Activated naive CD4-positive, alpha-beta T cell treated with anti-CD3 and anti-CD28 coated beads, Interleukin-2, amount 10 ng/mL, durations not matched to agents 7 days and 5 days (primary cell): ENCODE measurements at regions of chr16 and their contacts with region 1.

Region 1: DNA sequence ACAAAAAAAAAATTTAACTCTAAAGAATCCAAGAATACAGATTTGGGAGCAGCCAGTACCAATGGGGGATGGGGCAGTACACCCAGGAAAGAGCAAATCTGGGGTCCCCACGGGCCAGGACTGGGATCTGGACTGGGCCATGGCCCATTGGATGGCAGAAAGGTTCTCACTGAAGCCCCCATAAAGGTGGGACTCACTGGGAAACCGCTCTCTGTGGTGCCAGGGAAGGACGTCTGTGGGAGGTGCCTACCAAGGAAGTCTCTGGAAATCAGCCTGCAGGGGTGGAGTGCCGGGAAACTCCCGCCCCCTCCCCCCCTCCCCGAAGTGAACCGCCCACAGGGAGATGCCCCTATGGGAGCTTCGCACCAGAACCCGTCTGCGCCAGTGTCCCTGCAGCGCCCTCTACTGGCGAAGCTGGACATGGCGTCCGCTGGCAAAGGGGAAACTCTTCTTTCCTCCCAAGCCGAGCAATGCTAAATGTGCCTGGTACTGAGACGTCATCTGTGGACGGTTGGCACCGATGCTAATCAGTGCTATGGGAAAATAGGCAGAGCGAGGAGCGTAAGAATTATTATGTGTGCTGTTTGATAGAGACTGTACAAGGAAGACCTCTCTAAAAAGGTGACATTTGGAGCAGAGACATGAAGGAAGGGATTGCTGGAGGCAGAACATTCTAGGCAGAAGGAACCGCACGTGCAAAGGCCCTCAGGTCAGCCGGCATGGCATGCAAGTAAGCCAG is 671.1 kb downstream of the WWOX start:
- DNase-seq: peak; percentile 79
- H3K4me3 Mint-ChIP-seq: no peak overlapping the region
- H3K27ac Mint-ChIP-seq: peak overlapping the region; percentile 22
- H3K4me1 Mint-ChIP-seq: peaks cover 13% of the 10 kb centered on the region
- H3K27me3 Mint-ChIP-seq: peaks cover 3% of the 10 kb centered on the region

Region 2: GRCh38 chr16:78624366-78624765 is 146.2 kb before region 1 on chr16:
- CTCF ChIA-PET with region 1: no interaction called
- DNase-seq: no peak
- H3K4me3 Mint-ChIP-seq: no peak overlapping the region
- H3K27ac Mint-ChIP-seq: no peak overlapping the region
- H3K4me1 Mint-ChIP-seq: no peaks in the 10 kb centered on the region
- H3K27me3 Mint-ChIP-seq: no peaks in the 10 kb centered on the region

Region 3: DNA sequence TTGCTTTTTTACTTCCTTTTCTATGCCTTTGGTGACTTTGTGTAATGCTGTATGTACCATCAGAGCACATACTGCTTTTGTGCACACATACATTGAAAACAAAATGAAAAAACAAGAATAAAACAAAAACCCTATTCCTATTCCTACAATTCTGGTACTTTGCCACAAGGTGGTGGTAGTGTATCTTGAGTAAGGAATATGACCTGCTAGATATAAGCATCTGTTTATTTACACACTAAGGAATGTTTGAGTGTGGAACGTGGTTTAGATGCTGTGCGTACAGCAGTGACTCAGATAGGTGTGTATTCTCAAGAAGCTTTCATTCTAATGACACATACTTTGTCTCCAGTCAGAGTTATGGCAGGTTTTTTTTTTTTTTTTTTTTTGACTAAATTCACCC is 64.8 kb before region 1 on chr16:
- CTCF ChIA-PET with region 1: interaction called, 10 read pairs
- DNase-seq: no peak
- H3K4me3 Mint-ChIP-seq: no peak overlapping the region
- H3K27ac Mint-ChIP-seq: no peak overlapping the region
- H3K4me1 Mint-ChIP-seq: peaks cover 8% of the 10 kb centered on the region
- H3K27me3 Mint-ChIP-seq: no peaks in the 10 kb centered on the region

Region 4: GRCh38 chr16:78742501-78743283 is 27.8 kb before region 1 on chr16:
- CTCF ChIA-PET with region 1: no interaction called
- DNase-seq: peak; percentile 80
- H3K4me3 Mint-ChIP-seq: peak overlapping the region; percentile 64
- H3K27ac Mint-ChIP-seq: peak overlapping the region; percentile 93
- H3K4me1 Mint-ChIP-seq: peaks cover 23% of the 10 kb centered on the region
- H3K27me3 Mint-ChIP-seq: no peaks in the 10 kb centered on the region